Prostate gland (tissue), 2 donors: ENCODE measurements at regions of chrX and their contacts with region 1.

Region 1: GRCh38 chrX:64205735-64206491 is 405 bp upstream of the AMER1 start:
- DNase-seq: peak; percentile 93
- H3K4me3 ChIP-seq: peak overlapping the region; percentile 55 to 56
- H3K27ac ChIP-seq: peak overlapping the region; percentile 88 to 91
- H3K4me1 ChIP-seq: no peaks in the 10 kb centered on the region
- H3K27me3 ChIP-seq: no peaks in the 10 kb centered on the region
- CTCF ChIP-seq: peak in 1 of 4 experiments; percentile 17
- POLR2A ChIP-seq: peak; percentile 40

Region 2: DNA sequence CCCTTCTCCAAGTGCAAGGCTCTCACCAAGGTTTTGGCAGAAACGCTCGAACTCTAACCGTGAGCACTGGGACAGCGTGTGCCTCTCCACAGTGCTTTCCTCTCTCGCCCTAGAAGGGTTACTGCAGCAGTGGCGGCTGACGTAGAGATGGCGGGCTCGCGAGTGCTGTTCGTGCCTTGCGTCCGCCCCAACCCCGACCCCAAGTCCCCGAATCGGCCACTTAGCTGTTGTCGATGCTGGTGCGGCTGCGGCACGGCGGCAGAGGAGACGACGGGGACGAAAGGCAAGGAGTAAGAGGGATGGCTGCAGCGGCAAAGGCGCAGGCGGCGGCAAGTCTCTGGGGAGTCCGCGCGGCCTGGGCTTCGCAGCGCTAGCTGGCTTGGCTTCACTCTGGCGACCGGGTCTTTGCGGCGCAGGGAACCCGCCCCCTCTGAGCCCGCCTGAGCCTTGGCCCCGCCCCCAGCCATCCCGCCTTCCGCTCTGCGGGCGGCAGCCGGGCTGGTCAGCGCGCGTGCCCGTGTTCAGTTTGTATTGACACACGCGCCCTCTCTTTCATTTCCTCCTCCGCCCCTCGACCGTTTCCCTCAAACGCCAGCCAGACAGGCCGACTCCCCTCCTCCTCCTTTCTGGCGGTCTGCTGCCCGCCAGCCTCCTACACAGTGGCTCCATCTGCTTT is 854.8 kb before region 1 on chrX and contains the start of gene SPIN4:
- intact Hi-C with region 1: loop called (anchors 5 kb)
- DNase-seq: peak; percentile 83
- H3K4me3 ChIP-seq: peak within 1 kb of the TSS; percentile 50 to 52
- H3K27ac ChIP-seq: peak within 1 kb of the TSS; percentile 80
- H3K4me1 ChIP-seq: no peaks in the 10 kb centered on the region
- H3K27me3 ChIP-seq: no peaks in the 10 kb centered on the region
- CTCF ChIP-seq: no peak
- POLR2A ChIP-seq: peak; percentile 74
- total RNA-seq, gene SPIN4: 3.5 to 5.8 TPM

Region 3: GRCh38 chrX:63754860-63755582 is 450.9 kb before region 1 on chrX:
- intact Hi-C with region 1: loop called (anchors 10 kb)
- DNase-seq: peak; percentile 90
- H3K4me3 ChIP-seq: peak overlapping the region; percentile 50 to 53
- H3K27ac ChIP-seq: peak overlapping the region; percentile 89 to 92
- H3K4me1 ChIP-seq: no peaks in the 10 kb centered on the region
- H3K27me3 ChIP-seq: no peaks in the 10 kb centered on the region
- CTCF ChIP-seq: no peak
- POLR2A ChIP-seq: peak; percentile 78

Region 4: DNA sequence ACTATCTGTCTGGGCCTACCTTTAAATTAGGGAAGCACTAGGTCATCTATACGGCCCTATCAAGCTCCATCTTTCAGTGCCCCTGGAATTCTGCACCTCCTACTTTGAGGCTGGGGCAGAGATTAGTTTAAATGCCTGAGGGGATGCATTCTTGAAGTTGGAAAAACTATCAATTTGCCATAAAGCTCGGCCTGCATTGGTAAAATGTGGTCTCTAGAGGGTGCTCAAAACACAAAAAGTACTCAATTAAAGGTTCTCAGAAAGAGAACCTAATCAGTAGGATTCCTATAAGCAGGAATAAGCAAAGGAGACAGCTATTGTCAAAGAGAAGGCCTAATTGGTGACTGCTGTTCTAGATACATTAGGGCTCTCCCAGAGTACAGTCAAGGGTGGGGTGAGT is 112.2 kb before region 1 on chrX:
- intact Hi-C with region 1: loop called (anchors 10 kb)
- DNase-seq: no peak
- H3K4me3 ChIP-seq: no peak overlapping the region
- H3K27ac ChIP-seq: no peak overlapping the region
- H3K4me1 ChIP-seq: no peaks in the 10 kb centered on the region
- H3K27me3 ChIP-seq: no peaks in the 10 kb centered on the region
- CTCF ChIP-seq: peak in 2 of 4 experiments; percentile 10 to 37
- POLR2A ChIP-seq: no peak

Region 5: DNA sequence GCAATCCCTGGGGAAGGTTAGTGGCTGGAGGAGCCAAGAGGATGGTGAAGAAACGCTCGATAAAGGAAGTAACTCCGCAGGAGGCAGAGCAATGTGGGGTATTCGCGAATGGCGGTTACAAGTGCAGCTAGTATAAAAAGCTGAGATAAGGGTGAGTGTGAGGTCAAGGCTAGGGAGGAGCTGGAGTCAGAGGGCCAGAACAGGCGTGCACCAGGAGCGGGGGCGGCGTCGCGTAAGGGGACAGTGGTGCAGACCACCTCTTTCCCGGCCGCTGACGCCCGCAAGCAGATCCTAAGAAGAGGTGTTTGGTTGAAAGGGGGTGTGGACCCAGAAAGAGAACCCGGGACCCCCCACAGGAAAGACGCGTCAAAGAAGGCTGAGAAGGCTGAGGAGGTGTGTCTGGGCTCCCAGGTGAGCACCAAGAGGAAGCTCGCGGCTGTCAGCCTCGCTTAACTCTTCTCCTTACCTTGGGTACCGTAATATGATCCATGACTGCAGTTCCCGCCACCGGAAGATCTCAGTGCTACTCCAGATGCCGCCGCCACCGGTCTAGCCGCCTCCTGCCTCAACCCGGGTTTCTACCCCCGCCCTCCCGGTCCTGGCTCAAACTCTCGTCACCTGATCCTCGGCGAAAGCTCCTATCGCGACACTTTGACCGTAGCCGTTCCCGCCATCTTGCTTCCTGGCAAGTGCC is 189.1 kb after region 1 on chrX and contains the start of gene MTMR8:
- intact Hi-C with region 1: loop called (anchors 10 kb)
- DNase-seq: peak; percentile 76
- H3K4me3 ChIP-seq: peak within 1 kb of the TSS; percentile 45 to 47
- H3K27ac ChIP-seq: peak within 1 kb of the TSS; percentile 22 to 23
- H3K4me1 ChIP-seq: no peaks in the 10 kb centered on the region
- H3K27me3 ChIP-seq: no peaks in the 10 kb centered on the region
- CTCF ChIP-seq: no peak
- POLR2A ChIP-seq: no peak
- total RNA-seq, gene MTMR8: 0.82 to 1.8 TPM